H1 (cell line): ENCODE measurements at regions of chr4 and their contacts with region 1.

Region 1: DNA sequence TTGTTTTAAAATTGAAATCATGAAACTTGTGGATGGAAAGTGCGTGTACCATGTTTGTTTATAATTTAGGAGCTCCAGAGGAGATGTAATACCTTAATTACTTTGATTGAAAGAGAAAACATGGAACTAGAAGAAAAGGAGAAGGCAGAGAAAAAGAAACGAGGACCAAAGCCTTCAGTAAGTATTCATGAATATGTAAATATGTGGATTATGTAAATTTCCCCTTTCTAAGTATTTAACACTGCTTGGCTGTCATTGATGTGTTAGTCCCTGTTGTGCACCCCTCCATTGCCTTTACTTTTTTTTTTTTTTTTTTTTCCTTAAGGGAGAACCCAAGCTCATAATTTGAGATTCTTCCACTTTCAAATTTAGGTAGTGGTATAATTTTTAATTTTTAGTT is 36.4 kb downstream of the SMARCA5 start:
- DNase-seq: no peak
- H3K4me3 ChIP-seq: no peak overlapping the region
- H3K27ac ChIP-seq: no peak overlapping the region
- H3K4me1 ChIP-seq: no peaks in the 10 kb centered on the region
- H3K27me3 ChIP-seq: no peaks in the 10 kb centered on the region
- CTCF ChIP-seq: no peak
- EP300 ChIP-seq: no peak
- POLR2A ChIP-seq: no peak
- RAD21 ChIP-seq: no peak

Region 2: GRCh38 chr4:143531380-143531779 is 18.5 kb before region 1 on chr4:
- CTCF ChIA-PET with region 1: interaction called, 10 read pairs
- POLR2A ChIA-PET with region 1: interaction called, 3 read pairs
- DNase-seq: no peak
- H3K4me3 ChIP-seq: no peak overlapping the region
- H3K27ac ChIP-seq: no peak overlapping the region
- H3K4me1 ChIP-seq: no peaks in the 10 kb centered on the region
- H3K27me3 ChIP-seq: no peaks in the 10 kb centered on the region
- CTCF ChIP-seq: peak in 1 of 3 experiments; percentile 14; a peak in 2 of 4 replicates
- EP300 ChIP-seq: no peak
- POLR2A ChIP-seq: no peak
- RAD21 ChIP-seq: no peak

Region 3: GRCh38 chr4:143641361-143641760 is 91.4 kb after region 1 on chr4:
- CTCF ChIA-PET with region 1: no interaction called
- POLR2A ChIA-PET with region 1: no interaction called
- DNase-seq: no peak
- H3K4me3 ChIP-seq: no peak overlapping the region
- H3K27ac ChIP-seq: no peak overlapping the region
- H3K4me1 ChIP-seq: no peaks in the 10 kb centered on the region
- H3K27me3 ChIP-seq: no peaks in the 10 kb centered on the region
- CTCF ChIP-seq: no peak
- EP300 ChIP-seq: no peak
- POLR2A ChIP-seq: no peak
- RAD21 ChIP-seq: no peak

Region 4: GRCh38 chr4:143743591-143743990 is 193.7 kb after region 1 on chr4:
- CTCF ChIA-PET with region 1: no interaction called
- POLR2A ChIA-PET with region 1: no interaction called
- DNase-seq: no peak
- H3K4me3 ChIP-seq: no peak overlapping the region
- H3K27ac ChIP-seq: no peak overlapping the region
- H3K4me1 ChIP-seq: no peaks in the 10 kb centered on the region
- H3K27me3 ChIP-seq: no peaks in the 10 kb centered on the region
- CTCF ChIP-seq: no peak
- EP300 ChIP-seq: no peak
- POLR2A ChIP-seq: no peak
- RAD21 ChIP-seq: no peak